ENCODE measurements at regions of chr11 and their contacts with region 1.

Region 1: GRCh38 chr11:14454861-14455632 is 44.6 kb downstream of the COPB1 start:
- DNase-seq: no peak
- H3K4me3 ChIP-seq: no peak overlapping the region
- H3K27ac ChIP-seq: no peak overlapping the region
- H3K4me1 ChIP-seq: no peaks in the 10 kb centered on the region
- H3K27me3 ChIP-seq: no peaks in the 10 kb centered on the region
- CTCF ChIP-seq: peak in 2 of 3 experiments; percentile 47 to 67

Region 2: GRCh38 chr11:14300661-14301304 is 154.3 kb before region 1 on chr11:
- intact Hi-C with region 1: loop called (anchors 1 kb)
- DNase-seq: peak; percentile 20 to 78
- H3K4me3 ChIP-seq: no peak overlapping the region
- H3K27ac ChIP-seq: no peak overlapping the region
- H3K4me1 ChIP-seq: peaks cover 3 to 20% of the 10 kb centered on the region in 2 donors
- H3K27me3 ChIP-seq: no peaks in the 10 kb centered on the region
- CTCF ChIP-seq: peak; percentile 75 to 83 (median 77)

Region 3: DNA sequence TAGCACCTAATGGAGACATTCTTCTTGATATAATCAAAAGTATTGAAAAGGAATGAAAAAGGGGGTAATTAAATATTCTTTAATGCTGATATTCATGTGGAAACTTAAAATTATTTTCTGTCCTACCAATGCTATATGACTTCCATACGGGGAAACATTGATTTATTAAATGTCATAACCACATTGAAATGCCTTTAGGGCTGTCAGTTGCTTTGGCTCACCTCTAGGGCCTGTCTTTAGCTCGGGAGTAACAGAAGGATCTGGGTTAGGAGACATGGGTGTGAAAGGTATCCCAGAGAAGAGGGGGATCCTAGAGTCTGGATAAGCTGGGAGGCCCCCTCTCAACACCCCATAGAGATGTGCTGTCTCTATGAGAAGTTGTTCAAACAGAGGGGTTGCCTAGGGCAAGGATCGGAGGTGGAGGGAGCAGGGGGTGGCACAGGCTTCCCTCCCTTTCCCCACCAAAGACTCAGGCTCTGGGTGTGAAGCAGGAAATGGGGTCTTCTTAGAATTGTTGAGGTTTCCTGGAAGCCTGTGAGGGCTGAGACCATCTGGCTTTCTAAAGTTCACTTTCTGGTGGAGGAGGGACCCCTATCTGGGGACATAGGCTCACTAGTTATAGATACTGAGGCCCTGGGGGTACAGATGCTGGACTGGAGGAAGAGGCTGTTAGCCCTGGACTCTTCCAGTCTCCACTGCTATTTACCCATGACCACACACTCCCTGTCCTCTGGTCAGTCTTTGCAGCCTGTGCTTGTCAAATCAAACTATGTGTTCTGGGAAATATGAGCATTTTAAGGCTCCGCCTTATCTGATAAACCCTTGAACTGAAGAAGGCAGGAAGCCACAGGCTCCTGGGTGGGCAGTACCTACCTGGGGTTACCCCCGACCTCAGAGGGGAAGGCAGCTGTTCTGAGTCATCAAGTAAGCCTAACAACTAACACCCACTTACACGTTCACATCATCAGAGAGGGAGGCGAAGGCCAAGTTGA is 40.3 kb before region 1 on chr11:
- intact Hi-C with region 1: loop called (anchors 5 kb)
- DNase-seq: no peak
- H3K4me3 ChIP-seq: no peak overlapping the region
- H3K27ac ChIP-seq: peak overlapping the region; percentile 35 to 59
- H3K4me1 ChIP-seq: peaks cover 0 to 17% of the 10 kb centered on the region in 2 donors
- H3K27me3 ChIP-seq: no peaks in the 10 kb centered on the region
- CTCF ChIP-seq: no peak

Measured in ascending aorta (tissue), 2 donors.